Panc1 (cell line): ENCODE measurements at regions of chr4 and their contacts with region 1.

Region 1: DNA sequence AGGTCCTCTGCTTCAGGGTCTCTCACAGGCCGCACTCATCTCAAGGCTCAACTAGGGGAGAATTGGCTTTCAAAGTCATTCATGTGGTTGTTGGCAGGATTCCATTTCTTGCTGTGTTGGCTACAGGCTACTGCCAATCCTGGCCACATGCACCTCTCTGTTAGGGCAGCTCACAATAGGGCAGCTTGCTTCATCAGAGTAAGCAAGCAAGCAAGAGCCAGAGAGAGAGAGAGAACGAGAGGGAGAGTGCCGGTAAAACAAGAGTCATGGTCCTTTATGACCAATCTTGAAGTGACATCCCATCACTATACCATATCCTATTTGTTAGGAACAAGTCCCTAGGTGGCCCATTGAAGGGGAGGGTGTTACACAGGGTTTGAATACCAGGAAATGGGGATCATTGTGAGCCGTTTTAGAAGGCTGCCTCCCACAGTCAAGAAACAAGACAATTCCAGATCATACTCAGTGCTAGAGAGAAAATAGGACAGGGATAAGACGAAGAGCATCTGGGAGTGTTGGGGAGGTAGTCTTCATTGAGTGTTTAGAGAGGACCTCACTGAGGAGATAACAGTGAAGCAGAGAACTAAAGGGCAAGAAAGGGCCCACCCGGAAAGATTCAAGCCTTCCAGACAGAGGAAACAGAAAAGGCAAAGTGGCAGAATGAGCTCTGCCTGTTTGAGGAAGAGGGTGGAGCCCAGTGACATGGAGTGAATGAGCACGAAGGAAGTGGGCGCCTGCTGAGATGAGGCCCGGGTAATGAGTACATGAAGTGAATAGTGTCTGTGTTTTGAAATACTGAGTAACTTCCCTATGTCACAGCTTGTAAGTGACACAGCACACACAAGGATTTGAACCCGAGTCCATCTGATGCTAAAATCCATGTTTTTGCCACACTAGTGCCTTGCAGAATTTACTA is 32.8 kb upstream of the TLR2 start:
- DNase-seq: no peak
- ATAC-seq: no peak
- H3K4me3 ChIP-seq: no peak overlapping the region
- H3K27ac ChIP-seq: no peak overlapping the region
- H3K4me1 ChIP-seq: no peaks in the 10 kb centered on the region
- H3K27me3 ChIP-seq: no peaks in the 10 kb centered on the region
- CTCF ChIP-seq: no peak

Region 2: GRCh38 chr4:153166716-153167501 is 484.4 kb before region 1 on chr4:
- CTCF ChIA-PET with region 1: no interaction called
- POLR2A ChIA-PET with region 1: no interaction called
- in situ Hi-C with region 1: no loop called
- intact Hi-C with region 1: no loop called
- DNase-seq: no peak
- ATAC-seq: no peak
- H3K4me3 ChIP-seq: no peak overlapping the region
- H3K27ac ChIP-seq: no peak overlapping the region
- H3K4me1 ChIP-seq: no peaks in the 10 kb centered on the region
- H3K27me3 ChIP-seq: 0 out of 2 replicates have a peak, but pooled peaks cover 2% of the 10 kb centered on the region
- CTCF ChIP-seq: no peak

Region 3: DNA sequence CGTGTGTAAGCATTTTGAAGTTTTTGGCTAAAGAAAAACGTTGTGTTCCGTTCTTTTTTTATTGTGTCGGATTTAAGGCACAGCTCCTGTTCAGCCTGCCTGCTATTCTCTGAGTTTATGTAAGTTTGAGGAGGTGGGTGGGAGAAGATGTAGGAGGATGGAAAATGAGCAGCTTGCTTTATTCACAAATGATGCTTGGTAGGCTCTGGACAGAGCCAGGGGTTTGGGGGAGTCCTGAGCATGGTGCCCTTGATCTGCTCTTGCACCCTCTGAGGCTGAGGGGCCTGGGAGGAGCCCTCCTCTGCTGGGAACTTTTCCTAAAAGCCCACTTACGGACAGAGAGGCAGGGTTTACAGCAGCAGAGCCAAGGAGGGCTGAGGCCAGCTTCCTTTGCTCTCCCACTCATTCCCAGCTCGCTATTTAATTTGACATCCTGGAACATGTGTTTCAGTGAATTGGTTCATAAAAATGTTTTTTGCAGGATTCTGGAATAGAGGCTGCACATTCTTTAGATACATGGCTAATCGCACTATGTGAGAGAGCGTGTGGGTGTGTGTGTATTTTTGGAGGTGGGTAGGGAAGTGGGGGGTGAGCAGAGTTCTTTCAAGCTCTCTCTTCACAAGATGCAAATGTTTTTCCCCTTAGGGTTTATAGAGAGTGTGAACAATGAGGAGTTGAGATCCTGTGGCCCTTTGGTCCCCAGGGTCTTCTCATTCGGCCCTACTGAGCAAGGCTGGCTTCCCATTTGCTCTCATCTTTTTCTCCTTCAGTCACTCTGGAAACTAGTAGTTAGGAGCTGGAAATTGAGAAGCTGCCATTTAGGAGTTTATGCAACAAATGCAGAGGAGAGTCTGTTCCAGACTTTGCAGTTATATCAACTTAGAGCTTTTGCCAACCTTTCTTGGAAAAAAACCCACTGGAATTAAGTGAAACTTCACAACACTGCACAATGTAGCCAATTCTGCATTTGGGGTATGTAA is 153.1 kb before region 1 on chr4:
- CTCF ChIA-PET with region 1: no interaction called
- POLR2A ChIA-PET with region 1: no interaction called
- in situ Hi-C with region 1: no loop called
- intact Hi-C with region 1: no loop called
- DNase-seq: no peak
- ATAC-seq: no peak
- H3K4me3 ChIP-seq: no peak overlapping the region
- H3K27ac ChIP-seq: no peak overlapping the region
- H3K4me1 ChIP-seq: no peaks in the 10 kb centered on the region
- H3K27me3 ChIP-seq: no peaks in the 10 kb centered on the region
- CTCF ChIP-seq: no peak

Region 4: GRCh38 chr4:153750197-153750817 is 99.0 kb after region 1 on chr4:
- CTCF ChIA-PET with region 1: no interaction called
- POLR2A ChIA-PET with region 1: no interaction called
- in situ Hi-C with region 1: no loop called
- intact Hi-C with region 1: loop called (anchors 5 kb)
- DNase-seq: peak; percentile 47
- ATAC-seq: peak; percentile 90
- H3K4me3 ChIP-seq: no peak overlapping the region
- H3K27ac ChIP-seq: no peak overlapping the region
- H3K4me1 ChIP-seq: no peaks in the 10 kb centered on the region
- H3K27me3 ChIP-seq: no peaks in the 10 kb centered on the region
- CTCF ChIP-seq: peak; percentile 78